HAP-1 (cell line): ENCODE measurements at regions of chr1 and their contacts with region 1.

Region 1: DNA sequence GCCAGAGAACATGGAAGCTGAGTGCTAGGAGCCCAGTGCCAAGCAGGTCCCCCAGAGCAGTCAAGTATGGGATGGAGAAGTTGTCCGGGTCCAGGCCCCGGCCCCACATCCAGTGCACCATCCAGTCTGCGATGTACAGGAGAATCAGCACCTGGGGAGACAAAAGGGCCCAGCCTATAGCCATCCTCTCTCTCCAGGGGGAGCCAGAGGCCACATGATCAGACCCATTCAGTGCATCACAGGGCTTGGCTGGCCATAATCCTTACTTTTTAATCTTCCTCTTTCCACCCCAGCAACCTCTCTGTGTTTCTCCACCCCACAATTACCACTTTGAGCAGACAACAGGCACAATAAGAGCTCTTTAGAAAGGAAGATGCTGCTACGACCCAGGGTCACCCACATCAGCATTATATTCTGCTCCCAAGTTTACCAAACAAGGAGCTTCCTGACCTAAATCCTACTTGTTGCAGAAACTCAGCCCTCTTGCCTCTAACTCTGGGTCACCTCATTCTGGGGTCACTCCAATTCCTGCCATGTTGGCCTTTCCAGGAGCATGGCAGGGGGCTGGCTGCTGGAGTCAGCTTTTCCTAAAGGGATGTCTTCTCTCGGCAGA is 16.4 kb upstream of the RAB29 start:
- DNase-seq: peak; percentile 39 to 79
- H3K4me3 ChIP-seq: no peak overlapping the region
- H3K4me1 ChIP-seq: no peaks in the 10 kb centered on the region
- H3K27me3 ChIP-seq: no peaks in the 10 kb centered on the region

Region 2: DNA sequence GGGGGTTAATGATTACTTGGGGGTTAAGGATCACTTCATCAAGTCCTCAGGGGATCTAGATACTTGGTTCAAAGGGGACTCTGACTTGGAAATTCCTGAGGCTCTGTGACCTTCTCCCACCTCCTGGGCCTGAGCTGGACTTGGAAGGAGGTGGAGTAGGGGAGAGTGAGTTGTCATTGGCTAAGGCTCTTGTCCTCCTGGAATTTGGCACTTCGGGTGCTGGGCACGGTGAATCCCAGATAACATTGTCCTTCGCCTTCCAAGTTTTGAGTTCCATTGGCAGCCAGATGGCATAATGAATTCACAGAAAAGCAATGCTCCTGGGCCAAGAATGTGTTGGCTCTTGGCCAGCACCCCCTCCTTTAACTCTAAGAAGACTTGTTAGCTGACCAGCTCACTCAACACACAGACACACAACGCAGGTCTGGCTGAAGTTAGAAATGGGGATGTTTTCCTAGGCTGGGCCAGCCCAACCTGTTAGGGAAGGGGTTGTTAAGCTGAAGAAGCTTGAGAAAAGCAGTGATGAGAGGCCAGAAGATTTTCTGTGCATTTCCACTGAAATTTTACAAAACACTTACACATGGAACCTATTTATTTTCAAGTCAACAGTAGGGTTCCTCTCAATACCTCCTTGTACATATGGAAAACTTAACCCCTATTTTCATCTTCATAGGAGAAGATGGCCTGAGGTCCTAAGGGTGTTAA is 121.9 kb after region 1 on chr1:
- in situ Hi-C with region 1: loop called (anchors 5 kb)
- DNase-seq: no peak
- H3K4me3 ChIP-seq: no peak overlapping the region
- H3K4me1 ChIP-seq: no peaks in the 10 kb centered on the region
- H3K27me3 ChIP-seq: no peaks in the 10 kb centered on the region

Region 3: DNA sequence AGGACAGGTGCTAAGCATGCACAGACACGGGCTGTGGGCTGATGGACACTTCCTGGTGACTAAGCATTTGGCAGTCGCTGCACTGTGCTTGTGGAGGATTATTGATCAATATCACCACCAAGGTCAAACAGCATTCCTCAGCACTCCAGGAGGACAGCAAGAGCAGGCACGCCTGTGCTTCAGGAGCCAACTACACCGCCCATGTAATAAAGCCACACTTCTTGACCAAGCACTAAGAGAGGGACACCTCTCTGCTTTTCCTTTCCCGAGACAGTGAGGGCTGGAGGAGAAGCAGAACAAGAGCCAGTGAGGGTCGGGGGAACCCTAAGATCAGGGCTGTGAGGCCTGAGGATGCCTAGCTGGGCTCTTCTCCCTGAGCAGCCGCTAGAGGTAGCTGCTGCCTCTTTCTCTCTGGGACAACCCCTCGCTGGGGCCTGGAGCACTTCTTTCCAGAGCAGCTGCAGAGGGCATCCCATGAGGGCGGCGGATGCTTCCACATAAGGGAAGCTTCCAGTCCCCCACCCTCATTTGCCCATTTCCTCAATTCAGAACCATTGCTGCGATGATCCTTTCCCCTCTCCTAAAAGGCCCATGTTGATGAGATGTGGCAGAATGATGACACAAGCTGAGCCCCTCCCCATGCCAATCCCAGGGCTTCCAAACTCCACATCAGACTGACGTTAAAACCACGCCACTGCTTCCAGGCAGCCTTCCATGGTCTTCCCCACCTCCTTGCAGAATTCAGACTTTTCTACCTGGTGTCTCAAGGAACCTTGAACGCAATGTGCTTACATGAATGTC is 192.5 kb after region 1 on chr1:
- in situ Hi-C with region 1: loop called (anchors 10 kb)
- DNase-seq: peak; percentile 28 to 69
- H3K4me3 ChIP-seq: no peak overlapping the region
- H3K4me1 ChIP-seq: no peaks in the 10 kb centered on the region
- H3K27me3 ChIP-seq: no peaks in the 10 kb centered on the region

Region 4: GRCh38 chr1:206575165-206575893 is 783.7 kb after region 1 on chr1:
- in situ Hi-C with region 1: no loop called
- DNase-seq: peak; percentile 71 to 82
- H3K4me3 ChIP-seq: no peak overlapping the region
- H3K4me1 ChIP-seq: peaks cover 15% of the 10 kb centered on the region
- H3K27me3 ChIP-seq: no peaks in the 10 kb centered on the region